WTC11 (cell line): ENCODE measurements at regions of chr17 and their contacts with region 1.

Region 1: DNA sequence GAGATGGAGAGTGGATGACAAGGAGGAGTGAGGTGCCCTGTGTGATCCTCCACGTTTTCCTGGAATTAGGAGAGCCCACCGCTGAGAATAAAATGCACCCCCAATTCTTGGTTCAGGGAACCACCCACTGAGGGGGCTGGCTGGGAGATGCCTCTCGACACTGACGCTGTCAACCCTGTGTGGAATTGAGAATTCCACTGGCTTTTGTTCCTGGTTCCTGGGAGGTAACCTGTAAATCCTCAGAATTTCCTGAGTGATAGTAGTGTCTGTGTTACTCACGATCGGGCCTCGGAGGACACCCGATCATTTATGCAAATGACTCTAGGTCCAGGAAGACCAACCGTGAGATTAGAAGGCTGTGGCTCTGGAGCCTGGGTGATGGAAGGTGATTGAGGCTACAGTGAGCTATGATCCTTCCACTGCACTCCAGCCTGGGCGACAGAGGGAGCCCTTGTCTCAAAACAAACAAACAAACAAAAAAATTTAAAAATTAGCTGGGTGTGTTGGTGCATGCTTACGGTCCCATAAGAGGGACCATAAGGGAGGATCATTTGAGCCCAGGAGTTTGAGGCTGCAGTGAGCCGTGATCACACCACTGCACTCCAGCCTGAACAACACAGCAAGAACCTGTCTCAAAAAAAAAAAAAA is 11.7 kb upstream of the PRPSAP1 start:
- DNase-seq: no peak
- ATAC-seq: peak; percentile 52
- H3K4me3 Mint-ChIP-seq: no peak overlapping the region
- H3K27ac Mint-ChIP-seq: 0 out of 2 replicates have a peak overlapping the region, but pooled peaks have one; percentile 25
- H3K4me1 Mint-ChIP-seq: peaks cover 26% of the 10 kb centered on the region
- H3K27me3 Mint-ChIP-seq: no peaks in the 10 kb centered on the region; the same call in 1 of the 2 replicates
- CTCF ChIP-seq: no peak

Region 2: DNA sequence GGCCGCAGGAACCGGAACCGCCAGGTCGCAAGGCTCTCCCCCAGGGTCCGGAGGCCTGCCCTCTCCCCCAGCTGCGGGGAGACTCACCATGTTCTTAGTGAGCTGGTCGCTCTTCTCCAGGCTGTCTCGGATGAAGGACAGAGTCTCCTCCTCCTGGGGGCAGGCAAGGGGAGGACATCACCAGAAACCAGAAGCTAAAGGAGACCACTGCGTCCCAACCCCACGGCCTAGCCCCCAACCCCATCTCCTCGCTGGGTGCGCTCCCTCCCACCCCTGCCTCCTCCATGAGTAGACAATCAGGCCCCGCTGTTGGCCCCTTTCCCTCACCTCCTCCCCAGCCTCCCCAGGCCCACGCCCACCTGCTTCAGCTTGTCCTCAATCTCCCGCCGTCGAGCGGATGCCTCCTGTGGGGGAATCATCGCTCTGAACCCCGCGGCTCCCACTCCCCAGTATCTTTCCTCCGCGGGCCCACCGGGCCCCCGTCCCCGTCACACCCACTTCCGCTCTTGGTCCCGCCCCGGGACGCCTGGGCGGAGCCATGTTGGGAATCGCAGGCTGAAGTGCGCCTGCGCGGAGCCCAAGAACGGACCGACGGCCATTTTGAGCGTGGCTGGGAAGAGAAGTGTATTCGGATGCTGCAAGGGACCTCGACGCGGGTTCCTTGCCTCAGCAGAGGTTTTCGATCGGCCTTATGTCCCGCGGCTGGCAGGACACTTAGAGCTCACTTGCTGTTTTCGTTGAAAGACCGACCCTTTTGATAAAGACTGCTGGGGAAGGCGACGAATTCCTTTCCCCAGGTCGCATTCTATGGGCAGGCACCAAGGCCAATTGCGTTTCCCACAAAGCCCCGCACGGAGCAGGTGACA is 261.9 kb before region 1 on chr17 and contains the start of gene EXOC7:
- CTCF ChIA-PET with region 1: interaction called, 10 read pairs
- POLR2A ChIA-PET with region 1: no interaction called
- DNase-seq: peak; percentile 92
- ATAC-seq: peak; percentile 72
- H3K4me3 Mint-ChIP-seq: peak within 1 kb of the TSS; percentile 88
- H3K27ac Mint-ChIP-seq: peak within 1 kb of the TSS; percentile 97
- H3K4me1 Mint-ChIP-seq: peaks cover 28% of the 10 kb centered on the region
- H3K27me3 Mint-ChIP-seq: no peaks in the 10 kb centered on the region; the same call in 1 of the 2 replicates
- CTCF ChIP-seq: no peak
- total RNA-seq, gene EXOC7: 90.0 to 126 TPM (median 96.2 TPM) in 3 replicates

Region 3: GRCh38 chr17:76353599-76354316 is 11.6 kb before region 1 on chr17 and contains the start of gene PRPSAP1:
- CTCF ChIA-PET with region 1: interaction called, 54 read pairs
- POLR2A ChIA-PET with region 1: interaction called, 5 read pairs
- DNase-seq: peak; percentile 86
- ATAC-seq: peak; percentile 94
- H3K4me3 Mint-ChIP-seq: peak within 1 kb of the TSS; percentile 95
- H3K27ac Mint-ChIP-seq: peak within 1 kb of the TSS; percentile 100
- H3K4me1 Mint-ChIP-seq: peaks cover 27% of the 10 kb centered on the region
- H3K27me3 Mint-ChIP-seq: no peaks in the 10 kb centered on the region
- CTCF ChIP-seq: no peak
- total RNA-seq, gene PRPSAP1: 50.0 to 56.5 TPM (median 52.3 TPM) in 3 replicates

Region 4: DNA sequence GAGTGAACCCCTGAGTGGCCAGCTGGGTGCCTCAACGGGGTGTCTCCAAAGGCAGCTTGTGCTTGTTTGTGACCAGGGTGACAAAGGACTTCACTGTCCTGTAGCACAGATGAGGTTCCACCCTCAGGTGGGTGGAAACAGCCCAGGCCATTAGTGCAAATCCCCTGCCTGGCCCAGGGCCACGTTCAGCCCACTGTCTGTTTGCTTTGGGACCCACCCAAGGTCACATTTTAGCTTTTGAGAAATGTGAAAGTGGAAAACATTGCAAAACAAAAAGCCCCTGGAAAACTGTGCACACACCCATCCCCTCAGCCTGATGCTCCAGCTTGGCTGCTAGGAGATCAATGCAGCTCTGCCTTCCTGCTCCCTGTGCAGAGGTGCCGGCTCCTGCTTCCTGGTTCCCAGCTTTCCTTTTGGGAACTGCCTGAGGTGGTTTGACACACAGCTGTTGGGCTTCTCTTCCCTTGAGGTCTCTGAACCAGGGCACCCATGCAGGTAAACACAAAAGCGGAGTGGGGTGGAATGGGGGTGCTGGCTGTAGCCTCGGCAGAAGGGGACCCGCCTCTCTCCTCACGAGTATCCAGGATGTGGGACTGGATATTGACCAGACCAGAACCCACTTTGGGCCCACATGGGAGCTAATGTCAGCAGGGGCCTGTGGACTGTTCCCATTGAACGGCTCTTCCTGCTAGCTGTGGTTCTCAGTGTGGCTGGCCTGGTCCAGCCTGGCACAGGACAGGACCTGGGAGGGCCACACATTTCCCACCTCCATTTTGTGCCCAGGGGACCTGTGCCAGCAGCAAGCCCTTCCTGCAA is 11.1 kb after region 1 on chr17:
- CTCF ChIA-PET with region 1: interaction called, 102 read pairs
- POLR2A ChIA-PET with region 1: no interaction called
- DNase-seq: no peak
- ATAC-seq: no peak
- H3K4me3 Mint-ChIP-seq: no peak overlapping the region
- H3K27ac Mint-ChIP-seq: no peak overlapping the region
- H3K4me1 Mint-ChIP-seq: no peaks in the 10 kb centered on the region
- H3K27me3 Mint-ChIP-seq: peaks cover 9% of the 10 kb centered on the region
- CTCF ChIP-seq: no peak